H1 (cell line): ENCODE measurements at regions of chr12 and their contacts with region 1.

Region 1: DNA sequence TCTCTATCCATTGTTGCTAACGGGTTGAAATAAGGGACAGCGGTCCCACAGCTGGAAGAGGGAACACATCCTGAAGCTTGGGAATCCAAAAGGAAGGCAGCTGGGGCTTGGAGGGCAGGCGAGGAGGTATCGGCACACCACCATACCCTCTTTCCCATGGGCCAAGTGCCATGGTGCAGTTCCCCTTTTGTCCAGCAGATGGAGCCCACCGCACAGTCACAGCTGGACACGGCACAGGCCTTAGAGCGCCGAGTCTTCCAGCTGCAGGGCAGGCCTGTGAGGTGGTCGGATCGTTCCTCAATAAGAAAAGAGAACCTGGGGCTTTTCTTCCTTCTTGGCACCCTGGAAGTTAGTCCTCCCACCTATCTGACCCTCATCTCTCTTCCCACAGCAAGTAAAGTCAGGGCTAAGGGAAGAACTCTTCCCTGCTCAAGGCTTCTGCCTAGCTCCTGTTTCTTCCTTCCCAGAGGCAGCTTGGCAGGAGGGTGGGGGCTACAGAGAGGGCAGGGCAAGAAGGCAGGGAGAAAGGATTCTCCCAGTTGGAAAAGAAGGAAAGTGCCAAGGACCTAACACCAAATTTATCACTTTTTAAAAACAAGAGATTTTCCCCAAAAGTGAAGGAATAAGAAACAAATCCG is 8.6 kb downstream of the PPP1R1A start:
- DNase-seq: peak; percentile 67 to 99
- H3K4me3 ChIP-seq: no peak overlapping the region
- H3K27ac ChIP-seq: no peak overlapping the region
- H3K4me1 ChIP-seq: peaks cover 0 to 10% (median 3%) of the 10 kb centered on the region in 4 experiments; a peak in 5 of 7 replicates
- H3K27me3 ChIP-seq: no peaks in the 10 kb centered on the region; a peak in 1 of 7 replicates
- CTCF ChIP-seq: peak; percentile 94 to 100 (median 100)
- EP300 ChIP-seq: no peak
- POLR2A ChIP-seq: no peak
- RAD21 ChIP-seq: peak; percentile 86 to 90

Region 2: GRCh38 chr12:54549774-54550451 is 29.9 kb before region 1 on chr12:
- CTCF ChIA-PET with region 1: interaction called, 55 read pairs
- POLR2A ChIA-PET with region 1: no interaction called
- DNase-seq: no peak
- H3K4me3 ChIP-seq: peak overlapping the region; percentile 29 to 77 (median 64)
- H3K27ac ChIP-seq: no peak overlapping the region
- H3K4me1 ChIP-seq: peaks cover 2 to 15% (median 10%) of the 10 kb centered on the region in 4 experiments
- H3K27me3 ChIP-seq: peaks cover 17 to 75% (median 57%) of the 10 kb centered on the region in 4 experiments
- CTCF ChIP-seq: no peak
- EP300 ChIP-seq: no peak
- POLR2A ChIP-seq: no peak
- RAD21 ChIP-seq: no peak

Region 3: DNA sequence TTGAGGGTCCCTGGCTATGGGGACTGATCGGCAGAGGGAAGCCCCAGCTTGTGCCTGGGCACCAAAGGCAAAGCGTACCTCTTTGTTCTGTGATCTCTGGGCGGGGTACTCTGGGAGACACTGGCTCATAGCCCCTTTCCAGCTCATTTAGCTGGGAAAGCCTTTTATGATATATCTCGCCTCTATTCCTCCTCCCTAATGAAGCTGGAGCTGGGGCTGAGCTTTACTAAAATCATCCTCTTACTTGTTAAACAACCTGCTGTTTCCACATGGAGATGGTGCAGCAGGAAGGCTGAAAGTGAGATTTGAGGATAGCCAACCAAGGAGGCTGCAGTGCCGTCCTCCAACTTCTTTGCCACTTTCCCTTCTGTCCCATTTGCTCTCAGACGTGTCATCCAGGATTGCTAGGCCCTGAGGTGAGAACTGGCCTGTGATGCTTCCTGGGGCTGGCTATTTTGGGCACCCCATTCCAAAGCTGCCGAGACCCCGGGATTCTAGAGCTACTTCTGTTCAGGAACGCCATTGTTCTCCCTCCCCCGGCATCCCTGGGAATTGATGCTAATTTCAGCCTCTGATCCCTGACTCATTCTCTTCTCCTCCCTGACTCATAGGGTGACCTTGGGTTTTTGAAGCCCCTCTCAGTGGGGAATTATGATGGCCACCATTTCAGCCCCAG is 14.4 kb before region 1 on chr12:
- CTCF ChIA-PET with region 1: interaction called, 55 read pairs
- POLR2A ChIA-PET with region 1: interaction called, 3 read pairs
- DNase-seq: no peak
- H3K4me3 ChIP-seq: peak overlapping the region in 3 of 4 experiments; percentile 3 to 29 (median 19); a peak in 4 of 8 replicates
- H3K27ac ChIP-seq: no peak overlapping the region
- H3K4me1 ChIP-seq: peaks cover 10 to 17% (median 14%) of the 10 kb centered on the region in 4 experiments; a peak in 6 of 7 replicates
- H3K27me3 ChIP-seq: peaks cover 15 to 38% (median 35%) of the 10 kb centered on the region in 4 experiments
- CTCF ChIP-seq: no peak
- EP300 ChIP-seq: no peak
- POLR2A ChIP-seq: no peak
- RAD21 ChIP-seq: no peak

Region 4: DNA sequence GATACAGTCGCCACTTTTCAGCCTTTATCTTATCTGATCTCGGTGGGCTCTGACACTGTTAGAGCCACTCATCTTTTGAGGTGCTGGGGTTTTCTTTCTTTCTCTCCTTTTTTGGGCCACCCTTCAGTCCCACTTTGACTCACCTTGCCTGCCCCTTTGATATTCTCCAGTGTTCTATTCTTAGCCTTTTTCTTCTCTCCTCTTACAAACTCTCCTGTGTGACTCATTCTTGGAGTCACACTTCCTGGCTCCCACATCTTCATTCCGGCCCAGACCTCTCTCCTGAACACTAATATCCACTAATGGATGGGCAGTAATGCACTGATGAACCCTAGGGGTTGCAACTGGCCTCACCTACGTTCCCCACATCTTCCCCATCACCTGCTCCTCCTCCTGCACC is 70.6 kb after region 1 on chr12:
- CTCF ChIA-PET with region 1: interaction called, 16 read pairs
- POLR2A ChIA-PET with region 1: no interaction called
- DNase-seq: no peak
- H3K4me3 ChIP-seq: no peak overlapping the region
- H3K27ac ChIP-seq: no peak overlapping the region
- H3K4me1 ChIP-seq: no peaks in the 10 kb centered on the region
- H3K27me3 ChIP-seq: no peaks in the 10 kb centered on the region
- CTCF ChIP-seq: no peak
- EP300 ChIP-seq: no peak
- POLR2A ChIP-seq: no peak
- RAD21 ChIP-seq: no peak